GM12878 (cell line): ENCODE measurements at regions of chr17 and their contacts with region 1.

Region 1: DNA sequence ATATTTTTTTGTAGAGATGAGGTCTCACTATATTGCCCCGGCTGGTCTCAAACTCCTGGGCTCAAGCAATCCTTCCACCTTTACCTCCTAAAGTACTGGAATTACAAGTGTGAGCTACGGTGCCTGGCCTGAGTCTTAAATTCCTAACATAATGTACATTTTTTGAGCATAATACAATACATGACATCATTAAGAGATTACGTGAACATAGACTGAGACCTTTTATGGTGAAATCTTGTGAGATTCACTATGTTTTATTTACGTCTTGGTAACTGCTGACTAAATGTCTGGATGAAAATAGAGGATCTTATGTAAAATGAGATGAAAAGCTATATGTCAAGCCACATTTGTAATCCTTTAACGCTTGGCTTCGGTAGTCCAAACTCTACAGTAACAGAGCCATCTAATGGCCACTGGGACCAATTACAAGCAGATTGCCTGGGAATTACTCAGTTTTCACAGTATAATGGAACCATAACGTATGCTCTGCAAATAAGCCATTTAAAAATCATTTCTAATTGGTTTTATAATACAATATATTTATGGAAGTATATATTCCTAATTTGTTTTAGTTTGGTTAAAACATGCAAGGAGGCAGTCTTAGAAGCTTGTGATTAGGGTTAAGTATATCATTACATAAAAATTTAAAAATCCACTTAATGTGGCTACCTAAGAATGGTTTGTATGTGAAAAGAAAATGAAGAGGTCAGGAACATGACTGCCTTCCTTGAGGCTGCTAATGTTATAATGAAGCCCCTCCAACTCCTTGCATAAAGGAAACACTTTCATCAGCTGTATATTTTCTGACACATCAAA is 8.1 kb upstream of the EFCAB13 start:
- DNase-seq: peak; percentile 48
- ATAC-seq: peak; percentile 89
- H3K4me3 ChIP-seq: no peak overlapping the region
- H3K27ac ChIP-seq: no peak overlapping the region
- H3K4me1 ChIP-seq: no peaks in the 10 kb centered on the region
- H3K27me3 ChIP-seq: no peaks in the 10 kb centered on the region
- CTCF ChIP-seq: peak; percentile 68 to 93 (median 80); a peak in 5 of 6 replicates
- EP300 ChIP-seq: no peak
- POLR2A ChIP-seq: no peak
- RAD21 ChIP-seq: peak; percentile 99

Region 2: GRCh38 chr17:47009759-47010594 is 305.7 kb before region 1 on chr17:
- CTCF ChIA-PET with region 1: no interaction called
- POLR2A ChIA-PET with region 1: no interaction called
- RAD21 ChIA-PET with region 1: no interaction called
- SMC1A ChIA-PET with region 1: no interaction called
- in situ Hi-C with region 1: no loop called
- intact Hi-C with region 1: no loop called
- DNase-seq: no peak
- ATAC-seq: no peak
- H3K4me3 ChIP-seq: no peak overlapping the region
- H3K27ac ChIP-seq: no peak overlapping the region
- H3K4me1 ChIP-seq: no peaks in the 10 kb centered on the region
- H3K27me3 ChIP-seq: no peaks in the 10 kb centered on the region
- CTCF ChIP-seq: no peak
- EP300 ChIP-seq: no peak
- POLR2A ChIP-seq: no peak
- RAD21 ChIP-seq: no peak

Region 3: DNA sequence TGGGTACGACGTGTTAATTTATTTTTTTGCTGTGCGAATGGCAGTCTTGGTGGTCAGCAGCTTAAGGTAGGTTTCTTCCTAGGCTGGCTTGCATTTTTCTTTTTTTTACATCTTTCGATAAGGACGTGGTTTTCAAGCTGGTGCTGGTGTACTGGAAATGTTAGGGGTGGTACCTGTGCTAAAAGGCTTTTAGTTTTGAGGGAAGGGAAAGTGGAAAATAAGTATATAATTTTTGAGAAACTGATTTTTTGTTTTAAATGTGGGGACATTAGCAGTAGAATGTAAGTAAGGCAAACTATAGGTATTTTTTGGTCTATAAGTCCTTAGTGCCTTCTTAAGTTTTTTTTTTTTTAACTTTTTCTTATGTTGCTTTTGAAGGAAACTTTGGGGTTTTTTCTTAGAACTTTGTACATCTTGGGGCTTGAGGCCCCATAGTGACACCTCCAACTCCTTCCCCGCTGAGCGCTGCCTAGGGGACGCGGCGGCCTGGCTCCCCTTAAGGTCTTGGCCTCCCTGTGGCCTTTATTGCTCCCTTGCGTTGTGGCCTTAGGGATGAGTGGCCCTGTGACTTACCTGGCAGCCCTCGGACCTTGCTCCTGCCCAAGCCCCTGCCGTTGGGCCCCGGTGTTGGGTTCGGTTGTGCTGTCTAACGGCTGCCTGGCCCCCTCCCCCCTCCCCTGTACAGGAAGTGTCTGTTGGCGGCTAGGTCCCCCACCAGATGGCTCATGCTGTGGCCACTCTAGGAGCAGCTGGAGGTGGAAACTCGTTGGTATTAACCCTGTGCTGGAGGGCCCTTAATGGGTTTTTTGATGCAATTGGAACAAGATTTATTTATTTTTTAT is 248.6 kb before region 1 on chr17:
- CTCF ChIA-PET with region 1: no interaction called
- POLR2A ChIA-PET with region 1: no interaction called
- RAD21 ChIA-PET with region 1: no interaction called
- SMC1A ChIA-PET with region 1: no interaction called
- in situ Hi-C with region 1: no loop called
- intact Hi-C with region 1: no loop called
- DNase-seq: peak; percentile 55
- ATAC-seq: peak; percentile 98
- H3K4me3 ChIP-seq: peak overlapping the region; percentile 91
- H3K27ac ChIP-seq: peak overlapping the region; percentile 93
- H3K4me1 ChIP-seq: peaks cover 3% of the 10 kb centered on the region
- H3K27me3 ChIP-seq: no peaks in the 10 kb centered on the region
- CTCF ChIP-seq: peak in 1 of 3 experiments; percentile 25; a peak in 2 of 6 replicates
- EP300 ChIP-seq: 0 out of 4 replicates have a peak, but pooled peaks of 1 of the 2 experiments have one; percentile 45
- POLR2A ChIP-seq: peak; percentile 99
- RAD21 ChIP-seq: no peak

Region 4: GRCh38 chr17:47205419-47205963 is 110.2 kb before region 1 on chr17:
- CTCF ChIA-PET with region 1: interaction called, 22 read pairs
- POLR2A ChIA-PET with region 1: interaction called, 3 read pairs
- RAD21 ChIA-PET with region 1: interaction called, 4 read pairs
- SMC1A ChIA-PET with region 1: interaction called, 21 read pairs
- in situ Hi-C with region 1: no loop called
- intact Hi-C with region 1: no loop called
- DNase-seq: peak; percentile 78
- ATAC-seq: peak; percentile 85
- H3K4me3 ChIP-seq: peak overlapping the region; percentile 2; the same call in 1 of the 2 replicates
- H3K27ac ChIP-seq: peak overlapping the region; percentile 68
- H3K4me1 ChIP-seq: peaks cover 64% of the 10 kb centered on the region
- H3K27me3 ChIP-seq: no peaks in the 10 kb centered on the region
- CTCF ChIP-seq: no peak
- EP300 ChIP-seq: peak in 1 of 2 experiments; percentile 39; a peak in 1 of 4 replicates
- POLR2A ChIP-seq: peak; percentile 31; the same call in 1 of the 2 replicates
- RAD21 ChIP-seq: no peak

Region 5: DNA sequence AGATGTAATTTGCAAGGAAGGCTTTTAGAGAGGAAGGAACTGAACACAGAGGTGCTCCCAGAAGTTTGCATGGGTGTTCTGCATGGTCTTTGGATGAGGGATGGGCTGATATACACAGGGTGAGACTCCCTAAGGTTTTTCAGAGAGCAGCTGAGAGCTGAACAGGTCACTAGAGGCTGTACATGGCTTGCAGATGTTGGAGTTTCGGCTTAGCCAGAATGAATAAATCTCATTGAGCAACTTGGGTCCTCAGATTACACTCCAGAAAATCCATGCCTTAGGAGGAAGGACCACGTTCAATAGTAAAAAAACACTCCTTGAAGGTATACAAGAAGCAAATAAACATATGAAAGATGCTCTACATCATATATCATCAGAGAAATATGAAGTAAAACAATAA is 69.5 kb before region 1 on chr17:
- CTCF ChIA-PET with region 1: interaction called, 19 read pairs
- POLR2A ChIA-PET with region 1: no interaction called
- RAD21 ChIA-PET with region 1: interaction called, 6 read pairs
- SMC1A ChIA-PET with region 1: interaction called, 8 read pairs
- in situ Hi-C with region 1: no loop called
- intact Hi-C with region 1: no loop called
- DNase-seq: no peak
- ATAC-seq: no peak
- H3K4me3 ChIP-seq: no peak overlapping the region
- H3K27ac ChIP-seq: no peak overlapping the region
- H3K4me1 ChIP-seq: no peaks in the 10 kb centered on the region
- H3K27me3 ChIP-seq: no peaks in the 10 kb centered on the region
- CTCF ChIP-seq: no peak
- EP300 ChIP-seq: no peak
- POLR2A ChIP-seq: no peak
- RAD21 ChIP-seq: no peak

Region 6: GRCh38 chr17:47279062-47279736 is 36.5 kb before region 1 on chr17:
- CTCF ChIA-PET with region 1: interaction called, 8 read pairs
- POLR2A ChIA-PET with region 1: interaction called, 3 read pairs
- RAD21 ChIA-PET with region 1: interaction called, 8 read pairs
- SMC1A ChIA-PET with region 1: interaction called, 20 read pairs
- in situ Hi-C with region 1: no loop called
- intact Hi-C with region 1: no loop called
- DNase-seq: peak; percentile 92
- ATAC-seq: peak; percentile 91
- H3K4me3 ChIP-seq: peak overlapping the region; percentile 57
- H3K27ac ChIP-seq: peak overlapping the region; percentile 79
- H3K4me1 ChIP-seq: peaks cover 40% of the 10 kb centered on the region
- H3K27me3 ChIP-seq: no peaks in the 10 kb centered on the region
- CTCF ChIP-seq: no peak
- EP300 ChIP-seq: peak; percentile 19 to 70; a peak in 2 of 4 replicates
- POLR2A ChIP-seq: no peak
- RAD21 ChIP-seq: no peak; the same call in 1 of the 2 replicates

Region 7: GRCh38 chr17:47297661-47298615 is 17.7 kb before region 1 on chr17:
- CTCF ChIA-PET with region 1: interaction called, 10 read pairs
- POLR2A ChIA-PET with region 1: no interaction called
- RAD21 ChIA-PET with region 1: interaction called, 3 read pairs
- SMC1A ChIA-PET with region 1: interaction called, 17 read pairs
- in situ Hi-C with region 1: no loop called
- intact Hi-C with region 1: no loop called
- DNase-seq: no peak
- ATAC-seq: no peak
- H3K4me3 ChIP-seq: no peak overlapping the region
- H3K27ac ChIP-seq: no peak overlapping the region
- H3K4me1 ChIP-seq: no peaks in the 10 kb centered on the region
- H3K27me3 ChIP-seq: no peaks in the 10 kb centered on the region
- CTCF ChIP-seq: no peak
- EP300 ChIP-seq: no peak
- POLR2A ChIP-seq: no peak
- RAD21 ChIP-seq: no peak

Region 8: GRCh38 chr17:47404006-47404405 is 88.3 kb after region 1 on chr17:
- CTCF ChIA-PET with region 1: no interaction called
- POLR2A ChIA-PET with region 1: no interaction called
- RAD21 ChIA-PET with region 1: no interaction called
- SMC1A ChIA-PET with region 1: no interaction called
- in situ Hi-C with region 1: no loop called
- intact Hi-C with region 1: no loop called
- DNase-seq: no peak
- ATAC-seq: no peak
- H3K4me3 ChIP-seq: no peak overlapping the region
- H3K27ac ChIP-seq: no peak overlapping the region
- H3K4me1 ChIP-seq: no peaks in the 10 kb centered on the region
- H3K27me3 ChIP-seq: no peaks in the 10 kb centered on the region
- CTCF ChIP-seq: no peak
- EP300 ChIP-seq: no peak
- POLR2A ChIP-seq: no peak
- RAD21 ChIP-seq: no peak